ENCODE measurements at regions of chr15 and their contacts with region 1.

Region 1: DNA sequence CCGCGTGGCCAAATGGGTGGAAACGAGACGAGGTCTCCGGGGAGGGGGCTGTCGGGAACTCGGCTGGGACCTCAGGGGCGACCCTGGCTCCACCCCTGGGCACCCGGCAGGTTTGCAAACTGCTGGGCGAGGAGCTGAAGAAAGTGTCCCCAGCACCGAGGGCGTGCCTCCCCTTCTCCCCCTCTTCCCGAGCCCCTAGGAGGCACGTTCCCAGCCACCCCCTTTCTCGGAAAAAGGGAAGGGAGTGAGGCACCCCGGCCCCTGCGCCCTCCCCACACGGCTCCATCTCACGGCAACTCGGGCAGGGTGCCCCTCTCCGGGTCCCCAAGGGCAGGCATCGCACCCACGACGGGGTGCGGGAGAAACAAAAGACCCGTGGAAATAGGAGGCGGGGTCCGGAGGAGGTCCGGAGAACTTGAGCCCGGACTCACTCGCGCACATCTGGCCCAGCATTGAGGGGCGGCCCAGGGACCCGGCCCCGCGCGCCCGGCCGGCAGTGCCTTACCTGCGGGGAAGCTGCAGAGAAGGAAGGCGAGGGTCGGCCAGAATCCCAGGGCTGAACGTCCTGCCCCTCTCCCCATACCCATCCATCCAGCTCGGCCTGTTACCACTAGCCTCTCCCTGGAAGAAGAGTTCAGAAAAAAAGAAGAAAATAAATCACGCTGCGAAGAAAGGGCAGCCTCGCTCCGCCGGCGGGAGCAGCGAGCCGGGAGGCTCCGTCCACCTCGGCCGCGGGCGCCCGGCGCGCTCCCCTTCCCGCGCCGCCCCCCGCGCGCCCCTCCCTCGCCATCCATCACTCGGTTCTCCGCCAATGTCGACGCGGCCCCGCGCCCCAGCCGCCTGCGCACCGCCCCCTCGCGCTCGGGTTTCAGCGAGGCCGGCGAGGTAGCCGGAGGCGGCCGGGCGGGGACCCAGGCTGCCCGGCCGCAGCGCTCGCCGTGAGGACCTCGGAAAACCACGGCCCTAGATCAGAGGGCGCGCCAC is 16.3 kb downstream of the RGMA start:
- DNase-seq: peak; percentile 87 to 96
- ATAC-seq: peak; percentile 89
- H3K4me3 ChIP-seq: peak overlapping the region; percentile 64 to 72
- H3K27ac ChIP-seq: peak overlapping the region in 1 of 2 donors; percentile 11
- H3K4me1 ChIP-seq: no peaks in the 10 kb centered on the region
- H3K27me3 ChIP-seq: no peaks in the 10 kb centered on the region

Region 2: GRCh38 chr15:92803847-92804609 is 268.7 kb before region 1 on chr15:
- intact Hi-C with region 1: loop called in 1 of 2 experiments (anchors 5 kb)
- DNase-seq: peak; percentile 91 to 93
- ATAC-seq: peak; percentile 81
- H3K4me3 ChIP-seq: no peak overlapping the region
- H3K27ac ChIP-seq: peak overlapping the region; percentile 52 to 97
- H3K4me1 ChIP-seq: peaks cover 0 to 2% of the 10 kb centered on the region in 2 donors
- H3K27me3 ChIP-seq: no peaks in the 10 kb centered on the region

Region 3: GRCh38 chr15:93035953-93036800 is 36.5 kb before region 1 on chr15:
- intact Hi-C with region 1: loop called (anchors 5 kb)
- DNase-seq: peak; percentile 59 to 68
- ATAC-seq: no peak
- H3K4me3 ChIP-seq: no peak overlapping the region
- H3K27ac ChIP-seq: no peak overlapping the region
- H3K4me1 ChIP-seq: no peaks in the 10 kb centered on the region
- H3K27me3 ChIP-seq: no peaks in the 10 kb centered on the region